Transverse colon (tissue), 4 donors: ENCODE measurements at regions of chr18 and their contacts with region 1.

Region 1: DNA sequence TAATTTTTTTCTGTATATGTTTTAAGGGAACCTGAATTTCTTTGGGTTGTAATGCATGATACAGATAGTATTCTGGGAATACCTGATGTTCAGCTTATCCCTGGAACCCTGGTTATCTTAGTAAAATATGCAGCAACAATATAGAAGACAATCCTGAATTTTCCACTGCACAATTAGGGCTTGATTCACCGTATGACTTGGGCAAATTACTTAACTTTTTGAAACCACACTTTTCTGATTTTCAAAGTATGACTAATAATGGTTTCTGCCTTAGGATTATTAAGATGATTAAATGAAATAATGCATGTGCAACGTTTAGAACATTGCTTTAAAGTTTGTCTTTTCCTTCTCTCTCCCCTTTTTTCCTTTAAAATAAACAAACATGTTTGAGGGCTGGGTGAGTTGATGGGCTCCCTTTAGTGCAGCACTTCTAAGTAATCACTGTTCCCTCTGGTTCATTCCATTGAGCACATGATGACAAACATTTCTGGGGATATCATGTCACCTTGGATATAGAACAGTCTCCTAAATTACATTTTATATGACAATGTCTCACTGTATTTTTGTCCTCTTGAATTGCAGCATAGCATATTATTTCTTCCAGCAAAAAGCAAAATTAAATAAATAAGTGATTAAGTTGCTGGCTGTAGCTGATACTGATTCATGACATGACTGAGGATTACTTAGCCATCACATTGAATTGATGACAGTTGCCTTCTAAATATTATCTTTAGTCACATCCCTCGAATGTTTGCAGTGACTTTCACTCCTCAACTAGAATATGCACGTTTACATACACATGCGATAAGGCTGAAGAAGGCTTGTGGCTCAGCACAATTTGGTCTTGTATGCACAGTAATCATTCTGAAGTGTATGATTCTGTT is 254.5 kb downstream of the NEDD4L start:
- DNase-seq: no peak
- H3K4me3 ChIP-seq: no peak overlapping the region
- H3K27ac ChIP-seq: no peak overlapping the region
- H3K4me1 ChIP-seq: peaks cover 0 to 9% (median 3%) of the 10 kb centered on the region in 4 donors
- H3K27me3 ChIP-seq: no peaks in the 10 kb centered on the region
- CTCF ChIP-seq: no peak
- EP300 ChIP-seq: no peak
- POLR2A ChIP-seq: no peak

Region 2: GRCh38 chr18:58349650-58350049 is 51.2 kb after region 1 on chr18:
- in situ Hi-C with region 1: no loop called
- intact Hi-C with region 1: loop called (anchors 2 kb)
- DNase-seq: no peak
- H3K4me3 ChIP-seq: no peak overlapping the region
- H3K27ac ChIP-seq: no peak overlapping the region
- H3K4me1 ChIP-seq: no peaks in the 10 kb centered on the region
- H3K27me3 ChIP-seq: no peaks in the 10 kb centered on the region
- CTCF ChIP-seq: no peak
- EP300 ChIP-seq: no peak
- POLR2A ChIP-seq: no peak